ENCODE measurements at regions of chr17 and their contacts with region 1.

Region 1: DNA sequence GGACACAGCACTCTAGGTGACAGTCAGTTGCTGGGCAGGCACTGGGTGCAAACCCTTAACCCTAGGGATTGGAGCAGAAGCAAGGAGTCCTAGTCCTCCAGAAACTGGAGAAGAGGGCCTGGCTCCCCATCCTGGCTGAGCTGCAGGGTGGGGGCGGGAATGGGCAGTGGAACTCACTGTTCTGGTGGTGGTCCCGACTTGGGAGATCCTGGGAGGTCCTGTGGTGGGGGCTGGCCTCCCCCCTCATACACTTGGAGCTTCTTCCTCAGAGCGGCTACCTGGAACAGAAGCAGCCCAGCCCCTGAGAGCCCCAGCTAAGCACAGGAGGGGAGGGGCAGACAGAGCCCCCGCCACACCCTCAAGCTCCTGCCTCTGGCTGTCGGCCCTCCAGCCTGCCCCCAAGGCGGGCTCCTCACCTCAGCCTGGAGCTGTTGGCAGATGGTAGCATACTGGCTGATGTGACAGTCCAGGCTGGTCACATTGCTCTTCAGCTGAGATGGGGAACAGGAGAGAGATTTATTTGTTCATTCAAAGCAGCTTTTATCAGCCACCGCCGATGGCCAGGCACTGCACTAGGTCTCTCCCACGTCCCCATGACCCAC is 15.0 kb downstream of the KIF18B start:
- DNase-seq: no peak
- H3K4me3 ChIP-seq: no peak overlapping the region
- H3K27ac ChIP-seq: no peak overlapping the region
- H3K4me1 ChIP-seq: no peaks in the 10 kb centered on the region
- H3K27me3 ChIP-seq: no peaks in the 10 kb centered on the region
- CTCF ChIP-seq: no peak
- POLR2A ChIP-seq: no peak

Region 2: DNA sequence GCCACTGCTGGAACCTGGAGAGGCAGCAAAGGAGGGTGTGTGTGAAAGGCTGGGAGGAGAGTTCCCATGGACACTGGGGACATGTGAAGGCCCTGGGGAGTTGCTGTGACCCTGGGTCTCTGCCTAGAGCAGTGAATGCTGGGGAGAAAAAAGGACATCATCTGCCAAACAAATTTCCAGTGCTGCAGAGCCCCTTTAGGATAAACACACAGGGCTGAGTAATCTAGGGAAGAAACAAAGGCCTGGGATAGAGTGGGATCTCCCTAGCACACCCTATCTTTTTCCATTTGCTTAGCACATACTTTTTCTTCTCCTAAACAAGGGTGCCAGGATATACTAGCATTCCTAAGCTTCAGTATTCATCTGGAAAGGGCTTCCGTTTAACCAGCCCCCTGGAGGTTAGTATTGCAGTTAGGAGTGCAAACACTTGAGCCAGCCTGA is 88.2 kb before region 1 on chr17:
- intact Hi-C with region 1: no loop called
- DNase-seq: no peak
- H3K4me3 ChIP-seq: no peak overlapping the region
- H3K27ac ChIP-seq: no peak overlapping the region
- H3K4me1 ChIP-seq: no peaks in the 10 kb centered on the region
- H3K27me3 ChIP-seq: no peaks in the 10 kb centered on the region
- CTCF ChIP-seq: no peak
- POLR2A ChIP-seq: no peak

Region 3: DNA sequence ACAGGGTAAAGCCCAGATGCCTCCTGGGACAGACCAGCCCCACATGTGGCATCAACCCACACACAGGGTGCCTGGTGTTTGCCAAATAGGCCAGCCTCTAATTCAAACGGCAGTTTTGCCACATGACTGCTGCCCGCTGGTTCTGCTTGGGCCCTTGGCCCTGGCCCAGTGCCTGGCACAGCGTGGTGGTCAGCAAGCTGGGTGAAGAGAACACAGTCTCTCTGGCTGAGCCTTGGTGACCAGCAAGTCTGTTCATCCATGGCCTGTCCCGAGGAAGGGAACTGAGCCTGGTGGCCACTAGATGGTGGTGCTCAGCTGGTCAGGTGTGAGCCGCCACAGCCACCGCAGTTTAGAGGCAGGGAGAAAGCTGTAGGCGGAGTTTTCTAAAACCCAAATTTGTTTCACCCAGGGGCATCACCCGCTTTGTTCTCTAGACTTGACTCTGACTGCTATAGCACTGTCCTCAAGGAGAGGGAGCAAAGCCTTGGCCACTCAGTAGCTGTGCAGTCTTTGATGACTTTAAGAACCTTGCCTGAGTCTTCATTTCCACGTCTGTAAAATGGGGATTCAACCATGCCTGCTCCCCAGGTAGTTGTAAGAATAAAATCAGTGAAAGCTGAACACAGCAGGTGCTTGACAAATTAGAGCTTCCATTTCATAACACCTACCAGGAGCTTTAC is 12.6 kb before region 1 on chr17:
- intact Hi-C with region 1: no loop called
- DNase-seq: peak; percentile 82 to 93 (median 88)
- H3K4me3 ChIP-seq: no peak overlapping the region
- H3K27ac ChIP-seq: no peak overlapping the region
- H3K4me1 ChIP-seq: peaks cover 9 to 18% of the 10 kb centered on the region in 2 donors
- H3K27me3 ChIP-seq: no peaks in the 10 kb centered on the region
- CTCF ChIP-seq: peak; percentile 55 to 93 (median 85)
- POLR2A ChIP-seq: no peak

Region 4: GRCh38 chr17:44979426-44979995 is 46.9 kb after region 1 on chr17:
- intact Hi-C with region 1: loop called in 1 of 2 experiments (anchors 5 kb)
- DNase-seq: no peak
- H3K4me3 ChIP-seq: no peak overlapping the region
- H3K27ac ChIP-seq: no peak overlapping the region
- H3K4me1 ChIP-seq: peaks cover 0 to 3% of the 10 kb centered on the region in 2 donors
- H3K27me3 ChIP-seq: no peaks in the 10 kb centered on the region
- CTCF ChIP-seq: no peak
- POLR2A ChIP-seq: no peak